Transverse colon (tissue), 4 donors: ENCODE measurements at regions of chrX and their contacts with region 1.

Region 1: GRCh38 chrX:44997888-44998287 is 124.9 kb downstream of the KDM6A start:
- DNase-seq: no peak
- H3K4me3 ChIP-seq: no peak overlapping the region
- H3K27ac ChIP-seq: no peak overlapping the region
- H3K4me1 ChIP-seq: peaks cover 21 to 43% (median 28%) of the 10 kb centered on the region in 4 donors
- H3K27me3 ChIP-seq: no peaks in the 10 kb centered on the region
- CTCF ChIP-seq: no peak
- EP300 ChIP-seq: no peak
- POLR2A ChIP-seq: no peak

Region 2: DNA sequence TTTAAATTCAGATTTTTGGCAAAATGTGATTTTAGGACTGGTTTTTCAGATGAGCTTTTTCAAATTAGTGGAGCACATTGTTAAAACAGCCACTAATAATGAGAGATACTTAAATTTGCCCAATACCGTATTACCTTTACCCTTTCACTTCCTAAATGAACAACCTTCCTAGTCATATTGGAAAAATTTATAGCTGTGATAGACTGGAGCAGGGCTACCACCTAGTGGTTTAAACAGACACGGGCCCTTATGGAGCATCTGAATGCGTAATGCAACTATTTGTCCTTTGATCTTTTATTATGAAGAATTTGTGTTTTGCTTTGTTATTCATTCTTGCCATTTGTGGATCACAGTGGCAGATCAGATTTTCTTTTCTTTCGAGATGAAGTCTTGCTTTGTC is 52.2 kb before region 1 on chrX:
- in situ Hi-C with region 1: no loop called
- intact Hi-C with region 1: loop called (anchors 10 kb)
- DNase-seq: no peak
- H3K4me3 ChIP-seq: no peak overlapping the region
- H3K27ac ChIP-seq: no peak overlapping the region
- H3K4me1 ChIP-seq: no peaks in the 10 kb centered on the region
- H3K27me3 ChIP-seq: no peaks in the 10 kb centered on the region
- CTCF ChIP-seq: peak in 2 of 5 experiments; percentile 12 to 18
- EP300 ChIP-seq: no peak
- POLR2A ChIP-seq: no peak